Activated T-helper 2 cell treated with anti-CD3 and anti-CD28 coated beads, Interferon-gamma antibody, Interleukin-2, Interleukin-4, amounts not matched to agents 10 μg/mL and 5 μg/mL and 100 μg/mL, durations not matched to agents 14 hours and 24 hours and 36 hours (primary cell): ENCODE measurements at regions of chr6 and their contacts with region 1.

Region 1: GRCh38 chr6:154733012-154733625 is at the start of gene SCAF8:
- DNase-seq: peak; percentile 83
- H3K4me3 Mint-ChIP-seq: peak within 1 kb of the TSS; percentile 91
- H3K27ac Mint-ChIP-seq: peak within 1 kb of the TSS; percentile 98
- H3K4me1 Mint-ChIP-seq: peaks cover 24% of the 10 kb centered on the region
- H3K27me3 Mint-ChIP-seq: no peaks in the 10 kb centered on the region
- total RNA-seq, gene SCAF8: 35.4 and 37.3 TPM in 2 replicates

Region 2: DNA sequence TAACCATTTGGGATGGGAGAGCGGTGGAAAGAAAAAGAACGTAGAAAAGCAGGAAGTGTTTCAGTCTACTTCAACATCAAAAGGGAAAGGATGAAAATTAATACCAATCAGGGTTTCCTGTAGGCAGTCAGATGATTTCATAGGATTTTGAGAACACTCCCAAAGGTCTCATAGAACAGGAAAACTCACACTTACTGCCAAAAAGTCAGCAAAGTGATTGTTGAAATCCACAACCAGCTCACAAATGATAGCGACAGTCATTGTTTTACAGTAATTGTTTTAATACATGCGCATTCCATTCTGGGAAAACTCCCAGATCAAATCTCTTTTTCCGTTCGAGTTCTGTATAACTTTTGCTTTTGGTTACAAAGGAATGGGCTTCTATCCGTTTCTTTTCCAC is 217.3 kb before region 1 on chr6:
- intact Hi-C with region 1: no loop called
- DNase-seq: no peak
- H3K4me3 Mint-ChIP-seq: no peak overlapping the region
- H3K27ac Mint-ChIP-seq: no peak overlapping the region
- H3K4me1 Mint-ChIP-seq: peaks cover 4% of the 10 kb centered on the region
- H3K27me3 Mint-ChIP-seq: peaks cover 32% of the 10 kb centered on the region

Region 3: DNA sequence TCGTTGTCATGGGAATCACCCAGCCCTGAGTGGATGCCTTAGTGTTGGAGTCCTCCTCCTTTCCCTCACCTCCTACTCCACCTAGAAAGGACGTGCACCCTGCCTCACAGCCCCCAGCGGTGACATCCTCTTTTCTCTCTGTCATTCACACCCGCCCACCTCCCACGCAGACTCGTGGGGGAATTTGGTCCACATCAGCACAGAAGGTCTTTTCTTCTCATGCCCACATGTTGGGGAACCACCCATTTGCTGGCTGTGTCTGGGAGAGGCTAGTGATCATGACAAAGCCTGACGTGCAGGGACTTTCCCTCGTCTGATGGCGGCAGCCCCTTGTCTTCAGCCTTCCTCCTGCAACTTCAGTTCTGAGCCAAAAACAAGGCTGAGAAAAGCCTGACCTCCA is 126.7 kb before region 1 on chr6:
- intact Hi-C with region 1: loop called (anchors 5 kb)
- DNase-seq: peak; percentile 26
- H3K4me3 Mint-ChIP-seq: peak overlapping the region; percentile 5
- H3K27ac Mint-ChIP-seq: peak overlapping the region; percentile 71
- H3K4me1 Mint-ChIP-seq: peaks cover 38% of the 10 kb centered on the region
- H3K27me3 Mint-ChIP-seq: peaks cover 10% of the 10 kb centered on the region

Region 4: DNA sequence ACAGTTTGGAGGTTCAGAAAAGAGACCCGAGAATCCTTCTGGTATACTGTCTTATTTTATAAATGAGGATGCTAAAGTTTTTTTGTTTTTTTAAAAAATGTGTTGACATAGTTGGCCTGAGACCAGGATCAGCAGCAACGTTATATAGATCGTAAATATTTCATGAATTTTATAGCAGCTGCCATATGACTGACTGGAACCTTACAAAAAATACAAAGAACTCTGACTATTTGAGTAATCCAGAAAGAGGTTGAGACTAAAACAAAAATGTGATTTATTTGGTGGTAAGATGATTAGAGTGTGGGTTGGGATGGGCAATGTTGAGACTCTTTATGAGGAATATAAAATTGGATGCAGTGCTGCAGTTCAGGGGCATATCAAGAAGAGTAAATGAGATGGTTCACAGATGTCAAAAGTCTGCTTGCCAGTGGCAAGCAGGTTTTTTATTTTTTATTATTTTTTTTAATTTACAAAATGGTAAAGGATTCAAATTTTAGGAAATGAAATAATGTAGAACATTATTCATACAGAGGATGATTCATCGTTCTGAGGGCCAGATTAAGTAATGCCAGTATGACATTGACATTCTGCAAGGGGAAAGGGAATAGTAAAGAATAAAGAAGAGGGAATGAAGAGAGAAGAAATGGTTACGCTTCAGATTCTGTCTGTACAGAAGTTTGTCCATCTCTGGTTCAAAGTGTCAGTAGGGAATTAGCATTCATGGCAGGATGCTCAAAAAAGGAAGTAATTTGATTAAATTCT is 58.6 kb after region 1 on chr6:
- intact Hi-C with region 1: no loop called
- DNase-seq: no peak
- H3K4me3 Mint-ChIP-seq: no peak overlapping the region
- H3K27ac Mint-ChIP-seq: no peak overlapping the region
- H3K4me1 Mint-ChIP-seq: peaks cover 10% of the 10 kb centered on the region
- H3K27me3 Mint-ChIP-seq: no peaks in the 10 kb centered on the region

Region 5: DNA sequence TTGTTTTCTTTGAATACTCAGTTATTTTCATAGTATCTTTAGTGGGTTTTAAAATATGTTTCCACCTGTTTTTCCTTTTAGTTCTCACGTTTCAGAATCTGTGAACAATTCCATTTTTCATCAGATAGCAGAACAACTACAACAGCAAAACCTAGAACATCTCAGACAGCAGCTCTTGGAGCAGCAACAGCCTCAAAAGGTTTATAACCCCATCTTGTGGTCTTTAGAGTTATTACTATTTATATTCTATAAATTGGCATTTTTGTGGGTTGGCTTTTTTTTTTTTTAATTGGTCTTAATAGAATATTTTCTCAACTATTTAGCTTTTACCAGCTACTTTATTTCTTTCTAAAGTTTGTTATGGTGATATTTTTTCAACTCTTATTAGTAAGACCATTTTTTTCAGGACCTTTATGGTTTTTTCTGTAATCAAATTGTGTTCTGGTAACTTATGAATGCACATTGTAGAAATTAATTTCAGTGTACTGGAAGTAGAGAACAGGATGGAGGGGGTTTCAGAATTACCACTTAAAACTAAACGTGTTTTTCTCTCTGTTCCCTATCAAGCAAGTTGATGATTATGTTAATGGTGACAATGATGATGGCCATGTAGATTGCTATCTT is 72.3 kb after region 1 on chr6:
- intact Hi-C with region 1: loop called (anchors 1 kb)
- DNase-seq: no peak
- H3K4me3 Mint-ChIP-seq: no peak overlapping the region
- H3K27ac Mint-ChIP-seq: no peak overlapping the region
- H3K4me1 Mint-ChIP-seq: peaks cover 2% of the 10 kb centered on the region
- H3K27me3 Mint-ChIP-seq: no peaks in the 10 kb centered on the region

Region 6: DNA sequence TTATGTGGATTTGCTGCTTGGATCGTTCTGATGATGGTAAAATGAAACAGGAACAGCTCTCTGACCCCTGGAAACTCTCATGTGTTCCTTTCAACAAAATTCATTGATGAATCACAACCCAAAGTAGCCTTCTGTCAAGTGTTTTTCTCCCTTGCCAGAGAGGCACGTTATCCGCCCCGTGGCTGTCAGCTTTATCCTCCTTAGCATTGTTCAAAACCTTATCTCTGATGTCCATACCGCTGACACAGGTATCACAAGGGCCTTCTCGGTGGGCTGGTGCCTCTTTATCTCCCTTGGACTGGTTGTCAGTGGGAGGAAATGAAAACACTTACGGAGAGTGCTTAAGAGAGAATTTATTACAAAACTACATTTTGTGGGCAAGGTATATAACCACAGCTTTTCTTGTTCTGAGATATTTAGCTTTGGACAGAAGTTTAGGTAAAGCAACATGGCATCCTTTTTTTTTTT is 346.9 kb after region 1 on chr6:
- intact Hi-C with region 1: no loop called
- DNase-seq: no peak
- H3K4me3 Mint-ChIP-seq: no peak overlapping the region
- H3K27ac Mint-ChIP-seq: peak overlapping the region; percentile 85
- H3K4me1 Mint-ChIP-seq: peaks cover 55% of the 10 kb centered on the region
- H3K27me3 Mint-ChIP-seq: no peaks in the 10 kb centered on the region

Region 7: DNA sequence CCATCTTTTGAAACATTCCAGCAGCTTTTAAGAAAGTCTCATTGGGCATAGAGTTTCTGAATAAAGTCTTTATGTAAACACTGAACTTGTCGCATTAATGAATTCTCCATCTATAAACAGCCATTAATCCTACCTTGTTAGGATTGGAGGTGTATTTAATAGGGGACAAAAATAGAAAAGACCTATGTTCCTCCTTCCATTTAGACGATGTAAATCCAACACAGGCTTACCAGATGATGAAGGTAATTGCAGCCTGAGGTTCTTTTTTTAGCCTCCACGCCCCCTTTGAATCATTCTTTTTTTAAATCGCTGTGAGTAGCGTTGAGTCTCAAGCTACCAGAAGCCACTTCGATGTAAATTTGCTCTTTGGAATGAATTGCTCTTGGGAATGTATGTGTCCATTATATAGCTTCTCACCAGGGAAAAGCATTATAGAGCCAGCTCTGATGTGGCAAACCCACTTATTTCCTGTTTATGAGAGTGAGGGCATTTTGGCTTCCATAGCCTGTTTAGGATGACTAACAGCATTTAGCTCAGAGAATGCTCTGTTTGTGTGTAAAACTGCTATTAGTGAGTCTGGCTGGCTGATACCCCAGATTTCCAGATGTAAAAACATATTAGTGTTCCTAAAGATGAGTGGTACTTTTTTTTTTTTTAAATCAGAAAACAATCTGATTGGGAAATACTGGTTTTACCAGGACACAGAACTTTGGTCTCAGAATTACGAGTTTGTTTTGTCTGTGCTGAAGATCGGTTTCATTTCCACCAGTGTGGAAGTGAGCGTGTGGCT is 455.8 kb after region 1 on chr6:
- intact Hi-C with region 1: no loop called
- DNase-seq: no peak
- H3K4me3 Mint-ChIP-seq: peak overlapping the region; percentile 26
- H3K27ac Mint-ChIP-seq: peak overlapping the region; percentile 89
- H3K4me1 Mint-ChIP-seq: peaks cover 46% of the 10 kb centered on the region
- H3K27me3 Mint-ChIP-seq: no peaks in the 10 kb centered on the region